Posterior vena cava (tissue), 2 donors: ENCODE measurements at regions of chr1 and their contacts with region 1.

Region 1: DNA sequence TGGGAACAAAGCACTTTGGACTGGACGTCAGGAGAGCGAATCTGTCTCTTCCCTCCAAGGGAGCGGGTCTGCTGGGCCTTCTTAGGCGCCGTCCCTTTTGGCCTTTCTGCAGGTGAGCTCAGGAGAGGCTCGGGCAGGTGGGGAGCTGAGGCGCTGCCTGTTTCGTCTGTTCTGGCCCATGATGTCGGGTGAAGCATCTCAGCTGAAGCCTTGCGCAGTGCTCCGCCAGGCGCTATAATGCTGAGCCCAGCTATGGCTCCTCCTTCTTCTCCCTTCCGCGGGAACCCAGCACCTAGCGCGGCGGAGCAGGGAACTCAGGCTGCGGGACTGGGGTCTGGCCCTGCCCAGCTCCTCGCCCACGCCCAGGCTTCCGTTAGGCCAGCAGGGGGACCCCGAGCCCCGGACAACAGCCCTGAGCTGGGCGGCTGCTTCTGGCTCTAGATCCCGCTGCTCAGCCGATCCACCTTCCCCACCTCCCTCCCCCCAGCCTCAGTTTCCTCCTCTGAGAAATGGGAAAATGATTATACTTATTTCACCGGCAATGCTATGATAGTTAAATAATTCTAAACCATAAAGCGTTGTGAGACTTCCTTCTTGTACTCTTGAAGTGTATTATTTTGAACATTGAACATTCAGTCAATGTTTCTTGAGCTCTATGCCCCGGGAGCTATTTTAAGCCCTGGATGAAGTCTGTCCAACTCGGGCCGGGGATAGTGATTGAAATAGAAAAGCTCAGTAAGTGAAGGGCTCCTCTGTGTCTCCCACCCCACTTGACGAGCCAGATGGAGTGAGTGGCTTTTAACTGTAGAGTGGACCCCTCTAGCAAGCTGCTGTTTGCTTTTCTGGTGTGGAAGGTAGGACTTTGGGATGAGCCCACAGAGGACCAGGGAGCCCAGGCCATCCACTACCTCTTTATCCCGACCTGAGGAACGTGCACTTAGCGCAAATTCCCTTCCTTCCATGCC is 9.6 kb upstream of the ADORA1 start:
- DNase-seq: peak; percentile 93

Region 2: DNA sequence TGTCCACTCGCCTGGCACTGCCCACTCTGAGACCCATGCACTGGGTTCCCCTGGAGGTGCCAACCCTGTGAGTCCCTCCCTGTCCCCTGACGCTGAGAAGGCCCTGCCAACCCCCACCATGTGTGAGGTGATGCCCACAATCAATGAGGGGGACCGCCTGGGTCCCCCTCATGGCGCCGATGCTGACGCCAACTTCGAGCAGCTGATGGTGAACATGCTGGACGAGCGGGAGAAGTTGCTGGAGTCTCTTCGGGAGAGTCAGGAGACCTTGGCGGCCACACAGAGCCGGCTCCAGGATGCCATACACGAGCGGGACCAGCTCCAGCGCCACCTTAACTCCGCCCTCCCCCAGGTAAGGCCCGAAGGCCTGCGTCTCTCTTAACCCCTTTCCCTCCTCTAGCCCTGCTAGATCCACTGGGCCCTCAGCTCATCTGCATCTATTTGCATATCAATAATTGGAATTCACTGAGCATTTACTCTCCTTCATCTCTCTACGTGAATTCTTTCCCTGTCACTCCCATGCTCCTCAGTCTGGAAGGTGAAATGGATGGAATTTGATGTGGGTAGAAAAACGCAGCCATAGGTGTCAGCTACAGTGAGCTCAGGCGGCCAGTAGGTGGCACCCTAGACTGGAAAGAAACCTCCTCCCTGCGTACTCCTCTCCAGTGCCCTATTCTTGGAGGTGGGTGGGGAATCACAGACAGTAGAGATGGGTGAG is 78.8 kb before region 1 on chr1:
- intact Hi-C with region 1: loop called in 1 of 2 experiments (anchors 10 kb)
- DNase-seq: peak; percentile 89

Region 3: GRCh38 chr1:204782118-204782700 is 1664.3 kb after region 1 on chr1:
- intact Hi-C with region 1: no loop called
- DNase-seq: no peak